PC-9 (cell line): ENCODE measurements at regions of chr6 and their contacts with region 1.

Region 1: DNA sequence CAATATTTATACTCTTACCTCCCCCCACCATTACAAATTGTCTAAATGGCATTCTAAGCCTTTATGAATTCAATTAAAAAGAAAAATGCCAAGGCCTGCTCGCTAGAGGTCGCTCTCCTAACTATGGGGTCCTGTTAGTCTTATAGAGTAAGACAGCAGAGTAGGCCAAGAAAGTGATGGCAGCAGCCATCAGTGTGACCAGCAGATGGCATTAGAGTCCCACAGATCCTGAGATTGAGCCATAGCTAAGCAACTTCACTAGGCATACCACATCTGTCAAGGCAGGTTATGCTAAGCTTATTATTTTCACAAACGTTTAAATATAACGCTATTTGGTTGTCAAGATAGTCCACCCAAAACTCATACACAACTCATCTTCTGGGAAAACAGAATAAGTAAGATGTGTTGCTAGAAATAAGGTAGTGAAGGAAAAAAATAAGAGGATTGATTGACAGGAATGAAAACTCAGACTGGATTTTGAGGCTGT is 57.6 kb upstream of the SCAF8 start:
- DNase-seq: peak; percentile 77 to 85
- H3K4me3 ChIP-seq: no peak overlapping the region
- H3K27ac ChIP-seq: no peak overlapping the region
- H3K4me1 ChIP-seq: no peaks in the 10 kb centered on the region
- H3K27me3 ChIP-seq: no peaks in the 10 kb centered on the region
- CTCF ChIP-seq: peak; percentile 99

Region 2: DNA sequence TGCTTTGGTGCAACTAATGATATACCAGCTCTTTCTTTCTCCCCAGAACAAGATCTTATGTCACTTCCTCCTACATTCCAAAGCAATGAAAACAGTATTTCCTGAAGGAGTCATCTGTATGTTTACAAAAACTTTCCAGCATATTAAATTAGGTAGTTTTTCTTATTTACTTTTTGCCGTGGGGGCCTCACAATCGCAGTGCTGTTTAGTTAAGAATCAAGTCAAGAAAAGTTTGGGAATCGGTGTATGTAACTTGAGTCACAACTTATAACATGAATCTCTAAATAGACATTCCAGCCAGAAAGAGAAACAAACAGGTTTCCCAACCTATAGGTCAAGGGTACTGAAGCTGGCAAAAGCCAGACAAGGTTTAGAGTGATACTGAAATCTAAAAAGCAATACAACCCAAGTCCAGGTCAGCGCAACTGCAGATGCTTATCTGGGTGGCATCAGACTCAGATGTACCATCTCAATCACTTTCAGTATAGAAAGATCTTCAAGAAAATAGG is 382.7 kb before region 1 on chr6:
- CTCF ChIA-PET with region 1: interaction called, 11 read pairs
- POLR2A ChIA-PET with region 1: no interaction called
- intact Hi-C with region 1: no loop called
- DNase-seq: peak; percentile 7 to 94
- H3K4me3 ChIP-seq: peak overlapping the region; percentile 44; the same call in 1 of the 2 replicates
- H3K27ac ChIP-seq: peak overlapping the region; percentile 94
- H3K4me1 ChIP-seq: peaks cover 51% of the 10 kb centered on the region
- H3K27me3 ChIP-seq: no peaks in the 10 kb centered on the region
- CTCF ChIP-seq: no peak

Region 3: GRCh38 chr6:154733012-154733625 is 57.5 kb after region 1 on chr6 and contains the start of gene SCAF8:
- CTCF ChIA-PET with region 1: no interaction called
- POLR2A ChIA-PET with region 1: no interaction called
- intact Hi-C with region 1: loop called (anchors 5 kb)
- DNase-seq: peak; percentile 45 to 80
- H3K4me3 ChIP-seq: peak within 1 kb of the TSS; percentile 89
- H3K27ac ChIP-seq: peak within 1 kb of the TSS; percentile 91
- H3K4me1 ChIP-seq: peaks cover 23% of the 10 kb centered on the region
- H3K27me3 ChIP-seq: no peaks in the 10 kb centered on the region
- CTCF ChIP-seq: peak; percentile 61; the same call in 1 of the 2 replicates
- total RNA-seq, gene SCAF8: 21.6 and 22.7 TPM in 2 replicates

Region 4: GRCh38 chr6:154848580-154848979 is 172.9 kb after region 1 on chr6:
- CTCF ChIA-PET with region 1: no interaction called
- POLR2A ChIA-PET with region 1: interaction called, 13 read pairs
- intact Hi-C with region 1: no loop called
- DNase-seq: no peak
- H3K4me3 ChIP-seq: no peak overlapping the region
- H3K27ac ChIP-seq: no peak overlapping the region
- H3K4me1 ChIP-seq: peaks cover 12% of the 10 kb centered on the region; the same call in 1 of the 2 replicates
- H3K27me3 ChIP-seq: no peaks in the 10 kb centered on the region
- CTCF ChIP-seq: no peak

Region 5: GRCh38 chr6:155314092-155314772 is 638.6 kb after region 1 on chr6 and contains the start of gene TFB1M:
- CTCF ChIA-PET with region 1: no interaction called
- POLR2A ChIA-PET with region 1: no interaction called
- intact Hi-C with region 1: loop called (anchors 10 kb)
- DNase-seq: peak; percentile 95
- H3K4me3 ChIP-seq: peak within 1 kb of the TSS; percentile 85
- H3K27ac ChIP-seq: peak within 1 kb of the TSS; percentile 77
- H3K4me1 ChIP-seq: peaks cover 30% of the 10 kb centered on the region
- H3K27me3 ChIP-seq: no peaks in the 10 kb centered on the region
- CTCF ChIP-seq: no peak
- total RNA-seq, gene TFB1M: 17.7 and 19.5 TPM in 2 replicates